ENCODE measurements at regions of chr3 and their contacts with region 1.

Region 1: DNA sequence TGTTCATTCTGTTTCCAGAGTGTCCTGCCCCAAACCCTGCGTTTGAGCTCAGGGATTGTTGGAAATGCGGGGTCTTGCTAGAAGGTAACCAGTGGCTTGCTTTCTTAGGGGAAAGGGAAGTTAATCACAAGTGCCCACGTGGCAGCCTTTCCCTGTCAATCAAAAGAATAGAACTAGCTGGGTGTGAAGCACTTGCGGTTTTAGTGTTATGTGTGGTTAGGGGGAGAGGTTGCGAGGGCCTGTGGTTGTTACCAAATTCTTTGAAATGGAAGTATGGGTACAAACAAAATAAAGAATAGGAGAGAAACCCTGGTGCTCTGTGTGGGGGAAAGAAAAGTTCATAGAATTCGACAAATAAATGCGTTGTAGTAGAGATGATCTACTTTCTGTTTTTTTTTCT is 67.6 kb downstream of the FNDC3B start:
- DNase-seq: peak; percentile 72 to 89
- ATAC-seq: peak; percentile 35 to 71 (median 71)
- H3K4me3 ChIP-seq: no peak overlapping the region
- H3K4me3 Mint-ChIP-seq: peak overlapping the region; percentile 92
- H3K27ac ChIP-seq: peak overlapping the region; percentile 78
- H3K27ac Mint-ChIP-seq: peak overlapping the region; percentile 98 to 99
- H3K4me1 ChIP-seq: peaks cover 60% of the 10 kb centered on the region
- H3K4me1 Mint-ChIP-seq: peaks cover 77 to 78% of the 10 kb centered on the region in 2 donors
- H3K27me3 ChIP-seq: no peaks in the 10 kb centered on the region
- H3K27me3 Mint-ChIP-seq: peaks cover 0 to 3% of the 10 kb centered on the region in 2 donors
- CTCF ChIP-seq: no peak

Region 2: DNA sequence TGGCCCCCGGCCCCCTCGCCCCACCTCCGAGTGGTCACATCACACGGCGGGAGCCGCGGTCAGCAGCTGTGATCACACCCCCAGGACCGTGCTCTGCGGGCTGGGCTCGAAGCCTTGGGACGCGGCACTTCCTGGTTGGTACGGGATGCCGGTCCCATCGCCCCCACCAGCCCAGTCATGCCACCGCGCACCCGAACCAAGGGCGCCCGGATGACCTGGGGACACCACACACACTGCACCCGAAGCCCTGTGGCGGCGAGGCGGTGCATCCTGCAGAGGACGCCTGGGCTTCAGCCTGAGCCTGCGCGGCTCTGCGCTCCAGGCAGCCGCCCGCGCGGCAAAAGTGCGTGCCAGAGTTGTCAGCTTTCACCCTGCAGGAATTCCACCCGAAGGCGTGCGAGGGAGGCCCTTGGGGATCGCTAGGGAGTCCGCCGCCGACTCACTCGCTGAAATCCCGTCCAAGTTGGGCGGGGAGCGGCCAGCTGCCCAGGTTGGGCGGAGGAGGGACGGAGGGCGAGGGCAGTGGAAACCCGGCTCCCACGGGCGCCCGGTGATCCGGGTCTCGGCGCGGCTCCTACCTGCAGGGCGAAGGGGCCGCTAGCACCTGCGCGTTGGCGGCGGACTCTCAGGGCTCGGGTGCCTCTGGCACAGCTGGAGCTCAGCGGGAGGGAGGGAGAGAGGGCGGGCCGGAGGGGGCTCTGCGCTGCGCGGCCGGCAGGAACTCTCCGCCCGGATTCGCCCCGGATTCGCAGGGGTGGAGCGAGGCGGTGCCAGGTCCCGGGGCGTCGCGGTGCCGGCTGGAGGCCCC is 297.0 kb before region 1 on chr3 and contains the start of gene PLD1:
- intact Hi-C with region 1: loop called (anchors 2 kb)
- DNase-seq: peak; percentile 58 to 65
- ATAC-seq: peak; percentile 67 to 86 (median 81)
- H3K4me3 ChIP-seq: peak within 1 kb of the TSS; percentile 73
- H3K4me3 Mint-ChIP-seq: peak within 1 kb of the TSS; percentile 93
- H3K27ac ChIP-seq: peak within 1 kb of the TSS; percentile 58
- H3K27ac Mint-ChIP-seq: peak within 1 kb of the TSS; percentile 80 to 93
- H3K4me1 ChIP-seq: peaks cover 19% of the 10 kb centered on the region
- H3K4me1 Mint-ChIP-seq: peaks cover 42 to 47% of the 10 kb centered on the region in 2 donors
- H3K27me3 ChIP-seq: no peaks in the 10 kb centered on the region
- H3K27me3 Mint-ChIP-seq: no peaks in the 10 kb centered on the region
- CTCF ChIP-seq: no peak
- total RNA-seq, gene PLD1: 13.2 to 26.3 (median 17.1) TPM

Region 3: GRCh38 chr3:172039436-172040077 is 67.4 kb before region 1 on chr3 and contains the start of gene FNDC3B:
- intact Hi-C with region 1: loop called (anchors 1 kb)
- DNase-seq: peak; percentile 93 to 94
- ATAC-seq: peak; percentile 81 to 92 (median 87)
- H3K4me3 ChIP-seq: peak within 1 kb of the TSS; percentile 99
- H3K4me3 Mint-ChIP-seq: peak within 1 kb of the TSS; percentile 98
- H3K27ac ChIP-seq: peak within 1 kb of the TSS; percentile 99
- H3K27ac Mint-ChIP-seq: peak within 1 kb of the TSS; percentile 94 to 100
- H3K4me1 ChIP-seq: peaks cover 42% of the 10 kb centered on the region
- H3K4me1 Mint-ChIP-seq: peaks cover 66 to 77% of the 10 kb centered on the region in 2 donors
- H3K27me3 ChIP-seq: no peaks in the 10 kb centered on the region
- H3K27me3 Mint-ChIP-seq: no peaks in the 10 kb centered on the region
- CTCF ChIP-seq: no peak
- total RNA-seq, gene FNDC3B: 154 to 214 (median 206) TPM

Region 4: DNA sequence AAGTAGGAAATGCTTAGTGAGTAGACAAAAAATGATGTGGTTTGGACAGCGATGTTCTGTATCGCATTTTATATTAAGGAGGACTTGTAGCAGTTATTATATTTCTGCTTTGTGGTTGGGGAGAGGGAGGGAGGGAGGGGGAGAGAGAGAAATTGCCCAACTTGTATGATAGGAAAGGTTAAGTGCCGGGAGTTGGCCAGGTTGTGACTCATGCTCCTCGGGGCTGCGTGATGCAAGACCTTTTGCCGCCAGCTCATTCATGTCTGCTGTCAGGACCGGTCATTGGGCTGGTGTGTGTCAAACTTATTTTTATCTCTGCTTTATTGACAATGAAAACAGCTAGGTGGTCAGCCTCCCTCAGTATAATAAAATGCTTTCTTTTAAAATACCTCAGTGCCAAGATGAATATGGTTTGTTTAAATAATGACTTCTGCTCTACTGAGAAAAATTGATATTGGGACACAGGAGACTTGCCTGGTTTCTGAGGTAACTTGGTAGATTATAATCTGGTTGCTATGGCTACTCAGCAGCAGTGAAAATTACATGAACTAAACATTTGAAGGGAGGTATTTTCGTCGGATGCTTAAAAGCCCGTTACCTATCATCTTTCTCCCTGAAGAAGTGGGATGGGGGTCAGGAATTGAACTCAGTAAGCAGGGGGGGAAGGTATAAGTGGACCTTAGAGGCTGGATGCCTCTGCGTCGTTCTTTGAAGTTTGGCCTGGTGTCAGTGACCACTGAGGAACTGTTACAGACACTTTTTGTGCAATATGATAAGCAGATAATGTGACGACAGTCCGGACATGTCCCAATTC is 23.1 kb after region 1 on chr3:
- intact Hi-C with region 1: loop called (anchors 1 kb)
- DNase-seq: peak; percentile 70 to 74
- ATAC-seq: peak; percentile 68 to 80 (median 68)
- H3K4me3 ChIP-seq: no peak overlapping the region
- H3K4me3 Mint-ChIP-seq: peak overlapping the region; percentile 87
- H3K27ac ChIP-seq: peak overlapping the region; percentile 94
- H3K27ac Mint-ChIP-seq: peak overlapping the region; percentile 88 to 99
- H3K4me1 ChIP-seq: peaks cover 47% of the 10 kb centered on the region
- H3K4me1 Mint-ChIP-seq: peaks cover 82 to 83% of the 10 kb centered on the region in 2 donors
- H3K27me3 ChIP-seq: no peaks in the 10 kb centered on the region
- H3K27me3 Mint-ChIP-seq: no peaks in the 10 kb centered on the region
- CTCF ChIP-seq: no peak

Region 5: GRCh38 chr3:172171396-172172075 is 64.5 kb after region 1 on chr3:
- intact Hi-C with region 1: loop called (anchors 2 kb)
- DNase-seq: no peak
- ATAC-seq: no peak
- H3K4me3 ChIP-seq: no peak overlapping the region
- H3K4me3 Mint-ChIP-seq: no peak overlapping the region
- H3K27ac ChIP-seq: no peak overlapping the region
- H3K27ac Mint-ChIP-seq: no peak overlapping the region
- H3K4me1 ChIP-seq: peaks cover 19% of the 10 kb centered on the region
- H3K4me1 Mint-ChIP-seq: peaks cover 76 to 78% of the 10 kb centered on the region in 2 donors
- H3K27me3 ChIP-seq: no peaks in the 10 kb centered on the region
- H3K27me3 Mint-ChIP-seq: no peaks in the 10 kb centered on the region
- CTCF ChIP-seq: no peak

Region 6: GRCh38 chr3:172289582-172289981 is 182.6 kb after region 1 on chr3:
- intact Hi-C with region 1: loop called (anchors 5 kb)
- DNase-seq: peak in 1 of 2 donors; percentile 22
- ATAC-seq: peak; percentile 75 to 83 (median 81)
- H3K4me3 ChIP-seq: no peak overlapping the region
- H3K4me3 Mint-ChIP-seq: peak overlapping the region; percentile 87
- H3K27ac ChIP-seq: peak overlapping the region; percentile 4
- H3K27ac Mint-ChIP-seq: peak overlapping the region; percentile 85 to 90
- H3K4me1 ChIP-seq: peaks cover 17% of the 10 kb centered on the region
- H3K4me1 Mint-ChIP-seq: peaks cover 66 to 72% of the 10 kb centered on the region in 2 donors
- H3K27me3 ChIP-seq: no peaks in the 10 kb centered on the region
- H3K27me3 Mint-ChIP-seq: no peaks in the 10 kb centered on the region
- CTCF ChIP-seq: peak; percentile 44

Measured in natural killer cell (primary cell).